Activated naive CD4-positive, alpha-beta T cell treated with anti-CD3 and anti-CD28 coated beads for 36 hours (primary cell): ENCODE measurements at regions of chr5 and their contacts with region 1.

Region 1: GRCh38 chr5:143008809-143009521 is 238.8 kb downstream of the ARHGAP26 start:
- DNase-seq: peak; percentile 95
- H3K4me3 Mint-ChIP-seq: no peak overlapping the region
- H3K27ac Mint-ChIP-seq: peak overlapping the region; percentile 85
- H3K4me1 Mint-ChIP-seq: peaks cover 56% of the 10 kb centered on the region
- H3K27me3 Mint-ChIP-seq: no peaks in the 10 kb centered on the region

Region 2: GRCh38 chr5:142769741-142770631 is 239.0 kb before region 1 on chr5 and contains the start of gene ARHGAP26:
- CTCF ChIA-PET with region 1: no interaction called
- intact Hi-C with region 1: loop called (anchors 2 kb)
- DNase-seq: peak; percentile 94
- H3K4me3 Mint-ChIP-seq: peak within 1 kb of the TSS; percentile 95
- H3K27ac Mint-ChIP-seq: peak within 1 kb of the TSS; percentile 81
- H3K4me1 Mint-ChIP-seq: peaks cover 37% of the 10 kb centered on the region
- H3K27me3 Mint-ChIP-seq: no peaks in the 10 kb centered on the region
- total RNA-seq, gene ARHGAP26: 17.0 to 19.5 TPM

Region 3: DNA sequence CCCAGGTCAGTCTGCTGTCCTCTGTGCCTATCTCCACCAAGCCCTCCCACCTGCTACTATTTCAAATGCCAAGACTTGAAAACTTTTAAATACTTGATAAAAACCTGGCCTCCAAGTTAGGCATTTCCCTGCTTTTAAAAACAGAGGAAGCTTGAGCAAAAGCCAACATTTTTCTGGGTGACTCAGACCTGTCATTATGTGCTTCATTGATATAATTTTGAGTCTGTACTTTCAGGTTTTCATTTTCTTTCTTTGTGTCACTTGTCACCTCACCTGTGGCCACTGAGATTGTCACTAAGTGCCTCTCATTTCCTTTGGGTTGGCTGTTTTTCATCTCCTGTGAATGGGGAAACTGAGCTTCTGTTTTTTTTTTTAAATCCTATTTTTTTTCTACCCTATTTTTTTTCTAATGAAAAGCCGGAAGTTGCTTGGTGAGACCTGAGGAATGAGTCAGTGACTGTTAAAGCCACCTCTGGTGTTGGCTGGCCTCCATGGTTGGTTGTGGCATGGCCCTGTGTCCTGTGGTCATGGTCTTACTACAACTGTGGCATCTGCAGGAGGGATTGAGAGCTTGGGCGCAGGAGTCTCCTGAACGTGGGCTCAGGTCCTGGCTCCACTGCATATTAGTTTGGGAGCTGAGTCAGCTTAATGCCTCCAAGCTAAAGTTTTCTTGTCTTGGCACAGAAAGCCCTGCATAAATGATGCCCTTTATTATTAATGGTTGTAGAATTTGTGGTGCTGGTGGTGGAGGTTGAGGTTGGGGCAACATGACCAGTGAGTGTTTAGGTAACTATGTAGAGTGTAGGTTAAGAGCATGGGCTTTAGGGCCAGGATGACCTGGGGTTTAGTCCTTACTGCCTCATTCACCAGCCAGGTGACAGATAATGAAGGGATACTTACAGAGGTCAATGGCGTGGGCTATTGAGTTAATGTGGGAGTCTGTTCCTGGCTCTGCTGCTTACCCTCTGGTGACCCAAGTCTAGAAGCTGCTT is 181.9 kb before region 1 on chr5:
- CTCF ChIA-PET with region 1: no interaction called
- intact Hi-C with region 1: loop called (anchors 1 kb)
- DNase-seq: peak; percentile 67
- H3K4me3 Mint-ChIP-seq: no peak overlapping the region
- H3K27ac Mint-ChIP-seq: peak overlapping the region; percentile 76
- H3K4me1 Mint-ChIP-seq: peaks cover 80% of the 10 kb centered on the region
- H3K27me3 Mint-ChIP-seq: no peaks in the 10 kb centered on the region

Region 4: DNA sequence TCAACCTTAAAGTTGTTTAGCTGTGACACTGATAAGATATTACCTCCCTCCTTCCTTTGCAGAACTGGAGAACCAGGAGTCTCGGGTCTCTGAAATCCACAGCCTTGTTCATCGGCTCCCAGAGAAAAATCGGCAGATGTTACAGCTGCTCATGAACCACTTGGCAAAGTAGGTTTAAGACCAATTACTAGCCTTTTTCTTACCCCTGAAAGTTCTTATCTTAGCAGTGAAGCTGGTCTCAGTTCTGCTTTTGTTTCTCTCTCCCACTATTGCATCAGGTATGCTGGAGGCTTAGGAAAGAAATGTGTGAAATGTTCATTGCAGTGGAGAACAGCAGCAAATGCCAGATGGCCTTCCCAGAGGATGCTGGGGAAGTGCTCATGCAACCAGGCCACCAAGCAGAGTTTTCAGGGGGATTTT is 48.6 kb after region 1 on chr5:
- CTCF ChIA-PET with region 1: interaction called, 3 read pairs
- intact Hi-C with region 1: loop called (anchors 1 kb)
- DNase-seq: no peak
- H3K4me3 Mint-ChIP-seq: no peak overlapping the region
- H3K27ac Mint-ChIP-seq: peak overlapping the region; percentile 92
- H3K4me1 Mint-ChIP-seq: peaks cover 63% of the 10 kb centered on the region
- H3K27me3 Mint-ChIP-seq: no peaks in the 10 kb centered on the region

Region 5: GRCh38 chr5:143355720-143356119 is 346.8 kb after region 1 on chr5:
- CTCF ChIA-PET with region 1: no interaction called
- intact Hi-C with region 1: loop called (anchors 2 kb)
- DNase-seq: peak; percentile 60
- H3K4me3 Mint-ChIP-seq: no peak overlapping the region
- H3K27ac Mint-ChIP-seq: no peak overlapping the region
- H3K4me1 Mint-ChIP-seq: peaks cover 71% of the 10 kb centered on the region
- H3K27me3 Mint-ChIP-seq: no peaks in the 10 kb centered on the region

Region 6: DNA sequence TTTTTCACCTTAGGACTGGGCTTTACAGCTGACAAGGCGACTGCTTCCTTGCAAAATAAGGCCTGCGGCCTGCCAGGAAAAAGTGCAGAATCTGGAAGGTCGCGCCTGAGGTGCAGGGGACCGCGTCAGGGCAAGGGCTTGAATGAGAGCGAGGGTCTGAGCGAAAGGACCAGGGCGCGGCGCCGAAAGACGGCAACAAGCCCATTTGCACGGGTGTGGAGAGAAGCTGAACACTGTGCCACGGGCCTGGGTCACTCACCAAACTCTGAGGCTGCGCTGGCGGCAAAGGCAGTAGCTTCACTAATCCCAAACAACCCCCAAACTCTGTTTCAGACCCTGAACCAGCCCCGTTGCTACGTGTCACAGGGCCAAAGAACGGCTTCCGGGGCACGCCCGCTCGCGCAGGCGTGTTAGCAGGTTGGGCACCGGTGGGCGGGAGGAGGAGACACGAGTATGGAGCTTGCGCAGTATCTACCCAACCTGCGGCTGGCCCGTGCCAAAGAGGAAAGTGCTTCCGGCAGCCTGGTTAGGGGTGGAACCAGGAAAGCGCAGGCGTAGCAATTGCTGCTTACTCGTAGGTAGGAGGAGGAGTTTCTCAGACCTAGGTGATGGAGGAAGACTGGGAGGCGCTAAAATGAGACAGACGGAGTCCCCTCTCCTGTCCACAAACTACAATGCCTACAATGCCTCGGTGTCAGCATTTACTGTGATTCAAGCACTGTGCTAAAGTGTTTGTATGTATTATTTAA is 1161.5 kb after region 1 on chr5 and contains the starts of genes KCTD16 and YIPF5:
- CTCF ChIA-PET with region 1: no interaction called
- intact Hi-C with region 1: loop called (anchors 1 kb)
- DNase-seq: peak; percentile 98
- H3K4me3 Mint-ChIP-seq: peak within 1 kb of the TSS; percentile 91
- H3K27ac Mint-ChIP-seq: peak within 1 kb of the TSS; percentile 60
- H3K4me1 Mint-ChIP-seq: peaks cover 39% of the 10 kb centered on the region
- H3K27me3 Mint-ChIP-seq: no peaks in the 10 kb centered on the region
- total RNA-seq, gene KCTD16: 0.27 to 0.29 TPM
- total RNA-seq, gene YIPF5: 31.2 to 33.3 TPM

Region 7: GRCh38 chr5:144298658-144299057 is 1289.7 kb after region 1 on chr5:
- CTCF ChIA-PET with region 1: no interaction called
- intact Hi-C with region 1: no loop called
- DNase-seq: no peak
- H3K4me3 Mint-ChIP-seq: no peak overlapping the region
- H3K27ac Mint-ChIP-seq: no peak overlapping the region
- H3K4me1 Mint-ChIP-seq: no peaks in the 10 kb centered on the region
- H3K27me3 Mint-ChIP-seq: peaks cover 9% of the 10 kb centered on the region